RWPE1 (cell line): ENCODE measurements at regions of chr15 and their contacts with region 1.

Region 1: GRCh38 chr15:55407949-55408791 is at the starts of genes CCPG1 and PIERCE2:
- DNase-seq: peak; percentile 90
- H3K27ac ChIP-seq: peak within 1 kb of the TSS; percentile 84
- CTCF ChIP-seq: peak; percentile 82

Region 2: GRCh38 chr15:55420171-55420866 is 12.1 kb after region 1 on chr15:
- CTCF ChIA-PET with region 1: no interaction called
- POLR2A ChIA-PET with region 1: interaction called, 13 read pairs
- DNase-seq: no peak
- H3K27ac ChIP-seq: no peak overlapping the region
- CTCF ChIP-seq: no peak